HEK293T (cell line): ENCODE measurements at regions of chr19 and their contacts with region 1.

Region 1: GRCh38 chr19:39390755-39391592 is at the starts of genes MED29 and PAF1:
- DNase-seq: peak; percentile 98

Region 2: GRCh38 chr19:39375929-39376328 is 15.0 kb before region 1 on chr19:
- CTCF ChIA-PET with region 1: no interaction called
- POLR2A ChIA-PET with region 1: no interaction called
- DNase-seq: no peak

Region 3: GRCh38 chr19:39403331-39404312 is 12.6 kb after region 1 on chr19:
- CTCF ChIA-PET with region 1: no interaction called
- POLR2A ChIA-PET with region 1: interaction called, 10 read pairs
- DNase-seq: no peak